Tibial artery (tissue), 4 donors: ENCODE measurements at regions of chr16 and their contacts with region 1.

Region 1: DNA sequence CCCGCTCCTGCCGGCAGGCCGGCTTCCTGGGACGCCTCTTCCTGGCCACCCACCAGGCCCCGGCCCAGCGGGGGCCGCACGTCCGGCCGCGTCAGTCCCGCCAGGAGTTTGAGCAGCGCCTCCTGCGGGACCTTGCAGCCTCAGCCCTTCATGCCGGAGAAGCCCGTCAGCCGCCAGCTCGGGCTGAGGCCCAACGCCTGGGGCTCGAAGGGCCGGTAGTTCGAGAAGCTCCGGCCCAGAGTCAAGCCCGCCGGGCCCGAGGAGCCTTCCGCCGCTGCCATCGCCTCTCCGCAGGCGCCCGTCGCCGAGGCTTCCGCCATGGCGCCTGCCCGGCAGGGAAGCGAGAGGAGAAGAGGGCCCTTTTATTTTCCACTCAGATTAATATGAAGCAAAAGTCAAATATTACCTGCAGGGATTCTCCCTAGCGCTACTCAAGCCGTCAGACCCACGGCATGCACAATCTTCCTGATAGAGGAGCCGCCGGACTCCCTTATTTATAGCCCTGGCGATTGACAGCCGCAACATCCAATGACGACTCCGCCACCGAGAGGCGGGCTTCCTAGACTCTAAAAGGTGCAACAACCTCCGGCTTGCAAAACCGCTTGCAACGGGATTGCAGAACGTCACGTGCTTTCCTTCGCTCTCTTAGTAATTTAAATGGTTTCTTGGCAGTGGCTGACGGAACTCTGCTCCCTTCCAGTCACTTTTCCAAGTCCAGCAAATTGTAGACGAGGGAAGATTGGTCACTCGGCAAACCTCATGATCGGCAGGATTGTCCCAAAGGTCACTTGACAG is at the start of gene SEPHS2:
- DNase-seq: peak; percentile 99 to 100
- H3K4me3 ChIP-seq: peak within 1 kb of the TSS; percentile 75 to 94
- H3K27ac ChIP-seq: peak within 1 kb of the TSS; percentile 92 to 93
- H3K4me1 ChIP-seq: peaks cover 0 to 23% (median 15%) of the 10 kb centered on the region in 4 donors
- H3K27me3 ChIP-seq: peaks cover 0 to 6% of the 10 kb centered on the region in 2 donors
- CTCF ChIP-seq: peak in 1 of 2 experiments; percentile 39

Region 2: DNA sequence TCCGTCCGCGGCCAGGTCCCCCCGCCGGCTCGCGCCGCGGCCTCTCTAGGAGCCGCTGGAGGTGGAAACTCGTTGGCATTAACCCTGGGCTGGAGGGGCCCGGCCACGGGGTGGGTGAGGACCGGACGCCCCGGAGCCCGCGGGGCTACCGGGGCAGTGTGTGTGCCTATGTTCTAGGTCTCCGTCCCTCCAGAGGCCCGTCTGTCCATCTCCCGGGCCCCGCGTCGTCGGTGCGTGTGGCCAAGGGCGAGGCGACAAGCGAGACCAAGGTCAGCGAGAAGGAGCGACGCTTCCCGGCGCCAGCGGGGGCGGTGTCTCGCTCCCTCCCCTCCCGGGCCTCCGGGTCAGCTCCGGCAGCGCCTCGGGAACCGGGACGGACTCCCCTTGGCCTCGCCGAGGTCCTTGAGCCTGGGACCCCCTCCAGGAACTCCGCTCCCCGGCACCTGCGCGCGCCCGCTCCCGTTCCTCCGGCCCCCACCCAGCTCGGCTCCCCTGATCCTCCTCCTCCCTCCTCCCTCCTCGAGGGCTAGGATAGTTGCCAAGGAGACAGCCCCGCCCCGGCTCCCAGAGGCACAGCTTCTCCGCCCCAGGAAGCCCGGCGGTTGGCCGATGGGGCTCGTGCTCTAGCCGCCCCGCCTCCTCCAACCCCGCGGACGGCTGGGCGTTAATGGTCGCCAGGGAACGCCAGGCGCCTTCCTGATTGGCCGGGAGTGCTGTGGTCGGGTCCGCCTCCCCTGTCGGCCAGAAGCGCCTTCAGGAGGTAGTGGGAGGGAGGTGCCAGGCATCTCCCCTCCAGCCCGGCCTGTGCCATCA is 81.4 kb after region 1 on chr16:
- intact Hi-C with region 1: loop called (anchors 5 kb)
- DNase-seq: peak; percentile 98 to 99
- H3K4me3 ChIP-seq: peak overlapping the region; percentile 63 to 93
- H3K27ac ChIP-seq: peak overlapping the region; percentile 93 to 99
- H3K4me1 ChIP-seq: peaks cover 0 to 35% (median 13%) of the 10 kb centered on the region in 4 donors
- H3K27me3 ChIP-seq: no peaks in the 10 kb centered on the region
- CTCF ChIP-seq: peak; percentile 28 to 36